PC-3 (cell line): ENCODE measurements at regions of chr21 and their contacts with region 1.

Region 1: GRCh38 chr21:24023402-24023801 is 1583.9 kb downstream of the MRPL39 start:
- DNase-seq: peak; percentile 81
- ATAC-seq: peak; percentile 98
- H3K4me3 ChIP-seq: peak overlapping the region; percentile 5; the same call in 1 of the 2 replicates
- H3K27ac ChIP-seq: peak overlapping the region; percentile 76
- H3K4me1 ChIP-seq: peaks cover 15% of the 10 kb centered on the region
- H3K27me3 ChIP-seq: no peaks in the 10 kb centered on the region
- CTCF ChIP-seq: no peak

Region 2: GRCh38 chr21:23725576-23725975 is 297.8 kb before region 1 on chr21:
- CTCF ChIA-PET with region 1: no interaction called
- POLR2A ChIA-PET with region 1: no interaction called
- intact Hi-C with region 1: no loop called
- DNase-seq: peak; percentile 18
- ATAC-seq: no peak; the same call in 1 of the 2 replicates
- H3K4me3 ChIP-seq: no peak overlapping the region
- H3K27ac ChIP-seq: no peak overlapping the region
- H3K4me1 ChIP-seq: no peaks in the 10 kb centered on the region
- H3K27me3 ChIP-seq: no peaks in the 10 kb centered on the region
- CTCF ChIP-seq: peak; percentile 30; the same call in 1 of the 2 replicates

Region 3: GRCh38 chr21:23853796-23854379 is 169.5 kb before region 1 on chr21:
- CTCF ChIA-PET with region 1: no interaction called
- POLR2A ChIA-PET with region 1: no interaction called
- intact Hi-C with region 1: loop called (anchors 5 kb)
- DNase-seq: peak; percentile 63
- ATAC-seq: peak; percentile 94
- H3K4me3 ChIP-seq: no peak overlapping the region
- H3K27ac ChIP-seq: no peak overlapping the region
- H3K4me1 ChIP-seq: no peaks in the 10 kb centered on the region
- H3K27me3 ChIP-seq: no peaks in the 10 kb centered on the region
- CTCF ChIP-seq: peak; percentile 75

Region 4: GRCh38 chr21:23951251-23951650 is 72.2 kb before region 1 on chr21:
- CTCF ChIA-PET with region 1: no interaction called
- POLR2A ChIA-PET with region 1: no interaction called
- intact Hi-C with region 1: loop called (anchors 1 kb)
- DNase-seq: peak; percentile 90
- ATAC-seq: peak; percentile 95
- H3K4me3 ChIP-seq: no peak overlapping the region
- H3K27ac ChIP-seq: peak overlapping the region; percentile 84
- H3K4me1 ChIP-seq: peaks cover 27% of the 10 kb centered on the region
- H3K27me3 ChIP-seq: no peaks in the 10 kb centered on the region
- CTCF ChIP-seq: no peak

Region 5: DNA sequence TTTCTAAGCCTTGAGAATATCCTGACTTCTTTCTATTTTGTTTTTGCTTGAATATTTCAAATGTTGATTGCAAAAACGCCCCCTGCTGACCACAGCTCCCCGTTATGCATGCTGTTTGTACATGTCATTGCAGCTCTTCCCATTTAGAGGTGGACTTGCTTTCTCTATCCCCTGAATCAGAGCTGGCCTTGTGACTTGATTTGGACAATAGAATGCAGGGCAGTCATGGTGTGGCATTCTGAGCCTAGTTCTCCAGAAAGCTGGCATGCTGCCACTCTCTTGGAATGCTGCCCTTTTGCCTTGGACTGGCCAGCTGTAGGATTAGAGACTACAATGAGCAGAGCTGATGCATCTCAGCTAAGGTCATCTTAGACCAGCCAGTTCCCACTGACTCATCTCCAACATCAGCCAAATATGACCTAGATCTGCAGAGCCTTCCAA is 22.4 kb after region 1 on chr21:
- CTCF ChIA-PET with region 1: interaction called, 3 read pairs
- POLR2A ChIA-PET with region 1: no interaction called
- intact Hi-C with region 1: loop called (anchors 2 kb)
- DNase-seq: peak; percentile 90
- ATAC-seq: peak; percentile 97
- H3K4me3 ChIP-seq: no peak overlapping the region
- H3K27ac ChIP-seq: peak overlapping the region; percentile 70; the same call in 1 of the 2 replicates
- H3K4me1 ChIP-seq: peaks cover 11% of the 10 kb centered on the region
- H3K27me3 ChIP-seq: no peaks in the 10 kb centered on the region
- CTCF ChIP-seq: peak; percentile 79